Calu3 (cell line): ENCODE measurements at regions of chr18 and their contacts with region 1.

Region 1: DNA sequence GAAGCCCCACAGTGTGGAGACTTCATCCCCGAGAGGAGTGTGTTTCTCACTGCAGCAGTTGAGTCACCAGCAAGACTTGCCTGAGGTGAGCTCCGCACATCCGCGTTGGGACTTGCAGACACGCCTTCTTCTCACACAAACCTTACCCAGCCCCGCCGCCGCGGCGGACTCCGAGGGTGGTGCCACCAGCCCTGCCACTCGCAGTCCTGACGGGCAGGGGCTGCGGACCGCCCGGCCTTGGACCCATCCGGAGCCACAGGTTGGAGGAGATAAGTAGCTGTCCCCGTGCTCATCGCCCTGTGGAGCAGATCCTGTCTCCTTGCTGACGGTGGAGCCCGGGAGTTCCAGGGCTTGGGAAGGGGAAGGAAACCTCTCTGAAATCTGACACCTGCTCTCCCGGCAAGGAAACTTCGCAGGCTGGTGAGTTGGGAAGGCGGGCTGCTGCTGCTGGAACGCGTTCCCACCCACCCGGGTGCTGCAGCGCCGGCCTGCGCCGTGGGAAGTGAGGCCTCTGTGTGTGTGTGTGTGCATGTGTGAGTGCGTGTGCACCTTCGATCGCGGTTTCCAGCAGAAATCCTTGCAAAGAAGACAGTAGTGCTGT is at the start of gene RAB27B:
- DNase-seq: peak; percentile 92
- H3K4me3 Mint-ChIP-seq: peak within 1 kb of the TSS; percentile 95
- H3K27ac Mint-ChIP-seq: peak within 1 kb of the TSS; percentile 84
- H3K4me1 Mint-ChIP-seq: peaks cover 67% of the 10 kb centered on the region
- H3K27me3 Mint-ChIP-seq: no peaks in the 10 kb centered on the region
- CTCF ChIP-seq: no peak
- total RNA-seq, gene RAB27B: 38.3 and 60.6 TPM in 2 replicates

Region 2: DNA sequence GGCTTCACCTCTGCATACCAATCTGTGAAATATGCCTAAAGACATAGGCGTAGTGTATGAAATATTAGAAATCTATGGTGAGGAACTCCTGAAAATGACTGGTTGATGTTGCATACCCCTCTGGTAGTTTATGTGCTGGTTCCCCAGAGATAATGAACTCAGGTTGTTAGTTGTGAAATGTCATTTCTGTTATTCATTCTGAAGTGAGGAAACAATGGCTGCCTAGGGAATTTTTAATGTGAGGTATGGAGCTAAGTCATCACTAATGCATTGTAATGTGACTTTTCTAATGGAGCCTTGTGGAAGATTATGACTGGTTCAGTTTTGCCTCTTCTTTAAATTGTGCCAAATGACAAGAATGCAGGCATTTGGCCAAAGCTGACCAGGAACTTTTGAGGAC is 61.8 kb before region 1 on chr18:
- CTCF ChIA-PET with region 1: no interaction called
- intact Hi-C with region 1: loop called (anchors 2 kb)
- DNase-seq: no peak
- H3K4me3 Mint-ChIP-seq: peak overlapping the region; percentile 23
- H3K27ac Mint-ChIP-seq: peak overlapping the region; percentile 82
- H3K4me1 Mint-ChIP-seq: peaks cover 85% of the 10 kb centered on the region
- H3K27me3 Mint-ChIP-seq: no peaks in the 10 kb centered on the region
- CTCF ChIP-seq: no peak

Region 3: GRCh38 chr18:54859667-54860421 is 31.5 kb after region 1 on chr18:
- CTCF ChIA-PET with region 1: interaction called, 8 read pairs
- intact Hi-C with region 1: loop called (anchors 2 kb)
- DNase-seq: no peak
- H3K4me3 Mint-ChIP-seq: peak overlapping the region; percentile 64
- H3K27ac Mint-ChIP-seq: peak overlapping the region; percentile 91
- H3K4me1 Mint-ChIP-seq: peaks cover 59% of the 10 kb centered on the region
- H3K27me3 Mint-ChIP-seq: no peaks in the 10 kb centered on the region
- CTCF ChIP-seq: no peak

Region 4: GRCh38 chr18:55534547-55534946 is 706.2 kb after region 1 on chr18:
- CTCF ChIA-PET with region 1: no interaction called
- intact Hi-C with region 1: no loop called
- DNase-seq: no peak
- H3K4me3 Mint-ChIP-seq: no peak overlapping the region
- H3K27ac Mint-ChIP-seq: no peak overlapping the region
- H3K4me1 Mint-ChIP-seq: no peaks in the 10 kb centered on the region
- H3K27me3 Mint-ChIP-seq: no peaks in the 10 kb centered on the region
- CTCF ChIP-seq: no peak